ENCODE measurements at regions of chr5 and their contacts with region 1.

Region 1: DNA sequence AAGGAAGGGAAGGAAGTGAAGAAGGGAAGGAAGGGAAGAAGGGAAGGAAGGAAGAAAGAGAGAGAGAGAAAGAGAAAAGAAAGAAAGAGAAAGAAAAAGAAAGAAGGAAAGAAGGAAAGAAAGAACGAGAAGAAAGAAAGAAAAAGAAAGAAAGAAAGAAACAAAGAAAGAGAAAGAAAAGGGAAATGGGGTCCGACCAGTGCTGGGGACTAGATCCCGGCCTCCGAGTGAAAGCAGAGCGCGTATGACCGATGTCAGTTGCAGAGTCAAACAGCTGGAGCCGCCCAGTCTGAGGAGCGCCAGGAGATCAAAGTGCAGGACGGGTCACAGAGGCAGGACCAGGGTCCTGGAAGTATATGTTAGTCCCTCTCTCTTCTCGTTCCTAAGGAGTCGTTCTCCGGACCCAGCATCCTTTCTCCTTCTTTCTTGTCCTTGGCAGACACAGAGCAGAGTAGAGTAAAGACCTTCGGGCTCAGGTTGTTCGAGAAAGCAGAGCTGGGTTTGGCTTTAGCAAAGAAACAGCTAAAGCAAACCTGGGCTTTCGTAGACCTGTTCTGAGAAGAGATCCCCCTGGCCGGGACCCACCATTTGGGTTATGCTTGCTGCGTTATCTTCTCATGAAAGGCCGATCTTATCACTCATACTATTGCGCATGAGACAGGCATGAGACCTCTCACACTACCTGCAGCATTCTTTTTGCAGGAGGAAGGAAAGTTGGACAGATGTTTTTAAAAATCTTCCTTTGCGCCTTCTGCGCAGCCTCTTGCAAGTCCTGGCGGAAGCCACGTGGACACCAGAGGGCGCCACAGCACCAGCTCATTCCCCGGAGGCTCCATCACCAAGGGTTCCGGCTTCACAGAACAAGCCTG is 305.2 kb upstream of the MSX2 start:
- DNase-seq: peak; percentile 18
- ATAC-seq: no peak
- H3K4me3 Mint-ChIP-seq: no peak overlapping the region
- H3K27ac Mint-ChIP-seq: no peak overlapping the region
- H3K4me1 Mint-ChIP-seq: peaks cover 4% of the 10 kb centered on the region
- H3K27me3 Mint-ChIP-seq: peaks cover 7% of the 10 kb centered on the region
- CTCF ChIP-seq: no peak

Region 2: DNA sequence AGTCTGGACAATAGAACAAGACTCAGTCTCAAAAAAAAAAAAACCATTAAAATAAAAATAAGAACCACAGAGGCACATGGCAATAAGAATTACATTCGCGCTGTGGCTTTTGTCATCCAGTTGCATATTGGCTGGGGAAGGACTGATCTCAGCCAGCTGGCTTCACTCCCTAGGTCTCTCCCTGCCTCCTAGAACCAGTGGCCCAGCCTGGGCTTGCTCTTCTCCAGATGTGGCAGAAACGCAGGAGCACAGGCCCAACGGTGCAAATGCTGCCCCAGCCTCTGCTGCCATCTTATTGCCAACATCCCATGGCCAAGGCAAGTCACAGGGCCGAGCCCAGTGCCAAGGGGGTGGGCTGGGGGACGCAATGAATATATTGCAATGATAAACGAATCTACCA is 1221.1 kb before region 1 on chr5:
- CTCF ChIA-PET with region 1: no interaction called
- POLR2A ChIA-PET with region 1: no interaction called
- intact Hi-C with region 1: no loop called
- DNase-seq: no peak
- ATAC-seq: no peak
- H3K4me3 Mint-ChIP-seq: no peak overlapping the region
- H3K27ac Mint-ChIP-seq: no peak overlapping the region
- H3K4me1 Mint-ChIP-seq: no peaks in the 10 kb centered on the region
- H3K27me3 Mint-ChIP-seq: peaks cover 11% of the 10 kb centered on the region
- CTCF ChIP-seq: no peak

Region 3: GRCh38 chr5:174877987-174878386 is 458.8 kb after region 1 on chr5:
- CTCF ChIA-PET with region 1: no interaction called
- POLR2A ChIA-PET with region 1: no interaction called
- intact Hi-C with region 1: no loop called
- DNase-seq: no peak
- ATAC-seq: no peak
- H3K4me3 Mint-ChIP-seq: no peak overlapping the region
- H3K27ac Mint-ChIP-seq: no peak overlapping the region
- H3K4me1 Mint-ChIP-seq: no peaks in the 10 kb centered on the region
- H3K27me3 Mint-ChIP-seq: no peaks in the 10 kb centered on the region
- CTCF ChIP-seq: no peak

Region 4: GRCh38 chr5:174935854-174936474 is 516.8 kb after region 1 on chr5:
- CTCF ChIA-PET with region 1: no interaction called
- POLR2A ChIA-PET with region 1: no interaction called
- intact Hi-C with region 1: loop called (anchors 10 kb)
- DNase-seq: peak; percentile 18
- ATAC-seq: no peak
- H3K4me3 Mint-ChIP-seq: no peak overlapping the region
- H3K27ac Mint-ChIP-seq: no peak overlapping the region
- H3K4me1 Mint-ChIP-seq: no peaks in the 10 kb centered on the region
- H3K27me3 Mint-ChIP-seq: peaks cover 8% of the 10 kb centered on the region
- CTCF ChIP-seq: no peak